ENCODE measurements at regions of chr22 and their contacts with region 1.

Region 1: GRCh38 chr22:39319270-39320022 is at the start of gene RPL3:
- DNase-seq: peak; percentile 94 to 96
- H3K4me3 ChIP-seq: peak within 1 kb of the TSS; percentile 94
- H3K27ac ChIP-seq: peak within 1 kb of the TSS; percentile 98
- H3K4me1 ChIP-seq: peaks cover 24% of the 10 kb centered on the region
- H3K27me3 ChIP-seq: no peaks in the 10 kb centered on the region
- CTCF ChIP-seq: no peak; the same call in 1 of the 2 replicates
- total RNA-seq, gene RPL3: 1,699 and 2,252 TPM in 2 replicates

Region 2: DNA sequence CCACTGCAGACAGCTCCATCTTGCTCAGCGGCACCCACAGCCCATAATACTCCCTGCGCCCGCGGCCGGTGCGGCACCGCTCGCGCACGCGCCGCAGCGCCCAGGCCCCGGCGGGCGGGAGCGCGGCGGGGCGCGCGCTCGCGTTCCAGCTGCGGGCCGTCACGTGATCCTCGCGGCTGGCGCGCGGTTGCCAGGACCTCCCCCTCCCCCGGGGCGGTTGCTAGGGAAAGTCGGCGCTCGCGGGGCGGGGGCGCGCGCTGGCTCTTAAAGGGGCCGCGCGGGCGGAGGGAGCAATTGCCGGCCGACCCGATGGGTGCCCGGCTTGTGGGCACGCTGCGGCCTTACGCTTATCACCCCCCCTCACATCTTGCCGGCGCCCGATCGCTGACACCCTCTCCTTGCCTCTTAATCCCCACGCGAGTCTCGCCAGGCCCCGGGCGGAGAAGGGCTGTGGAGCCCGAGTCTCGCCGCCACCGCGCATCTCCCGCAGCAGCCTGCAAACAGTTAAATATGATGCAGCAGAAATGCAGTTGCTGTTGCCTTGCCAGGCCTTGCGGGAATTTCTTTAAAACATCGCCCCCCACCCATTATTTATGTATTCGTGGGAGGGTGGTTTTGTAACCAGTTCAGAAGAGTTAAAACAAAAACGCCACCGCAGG is 447.1 kb before region 1 on chr22 and contains the start of gene CBX6:
- CTCF ChIA-PET with region 1: no interaction called
- POLR2A ChIA-PET with region 1: no interaction called
- intact Hi-C with region 1: loop called (anchors 2 kb)
- DNase-seq: peak; percentile 73 to 97
- H3K4me3 ChIP-seq: peak within 1 kb of the TSS; percentile 83
- H3K27ac ChIP-seq: peak within 1 kb of the TSS; percentile 62
- H3K4me1 ChIP-seq: peaks cover 28% of the 10 kb centered on the region
- H3K27me3 ChIP-seq: no peaks in the 10 kb centered on the region
- CTCF ChIP-seq: no peak
- total RNA-seq, gene CBX6: 131 and 136 TPM in 2 replicates

Region 3: GRCh38 chr22:39152511-39153219 is 166.8 kb before region 1 on chr22 and contains the start of gene CBX7:
- CTCF ChIA-PET with region 1: no interaction called
- POLR2A ChIA-PET with region 1: interaction called, 20 read pairs
- intact Hi-C with region 1: loop called (anchors 5 kb)
- DNase-seq: peak; percentile 79 to 94
- H3K4me3 ChIP-seq: peak within 1 kb of the TSS; percentile 77
- H3K27ac ChIP-seq: no peak within 1 kb of the TSS
- H3K4me1 ChIP-seq: peaks cover 16% of the 10 kb centered on the region
- H3K27me3 ChIP-seq: no peaks in the 10 kb centered on the region
- CTCF ChIP-seq: no peak
- total RNA-seq, gene CBX7: 28.2 and 29.1 TPM in 2 replicates

Region 4: GRCh38 chr22:39212721-39213376 is 106.6 kb before region 1 on chr22:
- CTCF ChIA-PET with region 1: interaction called, 3 read pairs
- POLR2A ChIA-PET with region 1: interaction called, 12 read pairs
- intact Hi-C with region 1: no loop called
- DNase-seq: peak; percentile 93 to 99
- H3K4me3 ChIP-seq: peak overlapping the region; percentile 41; the same call in 1 of the 2 replicates
- H3K27ac ChIP-seq: peak overlapping the region; percentile 87
- H3K4me1 ChIP-seq: peaks cover 55% of the 10 kb centered on the region
- H3K27me3 ChIP-seq: no peaks in the 10 kb centered on the region
- CTCF ChIP-seq: peak; percentile 61; the same call in 1 of the 2 replicates

Region 5: DNA sequence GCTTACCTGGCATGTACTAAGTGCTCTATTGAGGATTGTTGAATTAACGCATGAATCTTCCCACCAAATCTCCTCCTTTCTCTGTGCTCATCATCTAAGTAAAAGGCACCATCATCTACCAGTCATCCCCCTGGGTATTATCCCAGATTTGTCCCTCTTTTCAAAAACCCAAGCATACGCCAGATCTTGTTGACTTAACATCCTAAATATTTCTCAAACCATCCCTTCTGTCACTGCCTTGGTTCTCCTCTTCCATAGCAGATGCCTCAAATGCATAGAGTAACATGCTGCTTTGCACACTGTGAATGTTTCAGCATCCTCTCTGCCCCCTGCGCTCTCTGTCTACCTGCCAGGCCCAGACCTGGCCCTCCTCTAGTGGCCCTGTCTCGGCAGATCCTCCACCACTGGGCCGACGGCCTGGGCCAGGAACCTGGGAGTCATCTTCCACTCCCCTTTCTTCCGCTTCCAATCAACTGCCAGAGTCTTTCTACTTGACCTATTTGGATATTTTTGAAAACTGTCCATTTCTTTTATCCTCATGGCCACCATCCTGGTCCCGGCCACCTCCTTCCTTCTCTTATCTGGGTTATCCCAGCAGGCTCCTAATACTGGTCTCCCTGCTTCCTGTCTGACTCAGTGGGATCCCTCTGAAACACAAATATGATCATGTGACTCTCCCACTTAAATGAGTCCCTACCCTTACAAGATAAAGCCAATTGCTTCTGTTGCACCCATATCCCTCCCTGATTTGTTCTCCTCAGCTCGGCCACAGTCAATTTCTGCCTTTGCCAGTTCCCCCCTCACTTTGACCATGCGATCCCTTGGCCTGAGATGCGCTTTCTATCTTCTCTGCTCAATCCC is 76.7 kb after region 1 on chr22:
- CTCF ChIA-PET with region 1: interaction called, 5 read pairs
- POLR2A ChIA-PET with region 1: interaction called, 7 read pairs
- intact Hi-C with region 1: loop called (anchors 1 kb)
- DNase-seq: peak in 1 of 2 experiments; percentile 21
- H3K4me3 ChIP-seq: no peak overlapping the region
- H3K27ac ChIP-seq: no peak overlapping the region
- H3K4me1 ChIP-seq: peaks cover 6% of the 10 kb centered on the region
- H3K27me3 ChIP-seq: no peaks in the 10 kb centered on the region
- CTCF ChIP-seq: no peak

Region 6: DNA sequence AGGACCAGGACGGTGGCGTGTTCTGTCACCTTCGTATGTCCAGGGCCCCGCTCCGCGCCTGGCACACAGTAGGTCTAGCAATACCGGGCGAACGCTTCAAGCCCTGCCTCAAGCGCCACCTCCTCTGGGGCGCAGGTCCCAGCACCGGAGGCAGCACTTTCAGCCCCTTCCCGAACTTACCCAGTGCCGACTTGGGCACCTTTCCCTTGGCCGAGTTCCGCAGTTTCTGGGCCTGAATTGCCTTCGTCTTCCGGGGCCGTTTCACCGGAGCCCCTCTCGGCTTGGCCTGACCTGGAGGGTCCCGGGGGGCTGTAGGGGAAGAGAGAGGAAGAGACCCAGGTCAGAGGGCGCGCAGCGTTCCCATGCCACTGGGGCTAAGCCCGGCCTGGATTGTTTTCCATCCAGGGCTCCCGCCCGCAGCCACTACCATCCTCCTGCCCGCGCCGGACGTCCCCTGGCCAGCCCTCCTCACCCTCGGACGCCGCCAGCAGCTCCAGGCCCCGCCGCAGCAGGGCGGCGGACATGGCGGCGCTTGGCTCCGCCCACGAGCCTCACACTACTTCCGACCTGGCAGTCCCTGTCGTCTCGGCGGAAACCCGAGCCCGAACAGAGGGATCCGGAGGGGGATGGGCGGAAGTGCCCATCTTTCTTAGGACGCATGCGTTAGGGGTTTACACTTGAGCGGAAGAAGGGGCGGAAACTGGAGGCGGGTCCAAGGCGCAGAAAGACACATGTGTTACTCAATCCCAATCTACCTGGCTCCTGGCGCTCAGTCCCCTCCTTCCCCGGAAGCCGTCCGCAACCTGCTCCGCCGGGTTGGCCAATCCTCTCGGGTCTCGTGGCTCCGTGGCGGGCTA is 213.0 kb after region 1 on chr22 and contains the start of gene RPS19BP1:
- CTCF ChIA-PET with region 1: interaction called, 17 read pairs
- POLR2A ChIA-PET with region 1: interaction called, 5 read pairs
- intact Hi-C with region 1: no loop called
- DNase-seq: peak; percentile 100
- H3K4me3 ChIP-seq: peak within 1 kb of the TSS; percentile 87
- H3K27ac ChIP-seq: peak within 1 kb of the TSS; percentile 30
- H3K4me1 ChIP-seq: peaks cover 44% of the 10 kb centered on the region
- H3K27me3 ChIP-seq: no peaks in the 10 kb centered on the region
- CTCF ChIP-seq: peak; percentile 24; the same call in 1 of the 2 replicates
- total RNA-seq, gene RPS19BP1: 60.7 and 94.3 TPM in 2 replicates

Region 7: GRCh38 chr22:39997939-39998338 is 678.5 kb after region 1 on chr22:
- CTCF ChIA-PET with region 1: no interaction called
- POLR2A ChIA-PET with region 1: no interaction called
- intact Hi-C with region 1: no loop called
- DNase-seq: peak; percentile 68 to 74
- H3K4me3 ChIP-seq: no peak overlapping the region
- H3K27ac ChIP-seq: no peak overlapping the region
- H3K4me1 ChIP-seq: peaks cover 47% of the 10 kb centered on the region
- H3K27me3 ChIP-seq: peaks cover 14% of the 10 kb centered on the region; the same call in 1 of the 2 replicates
- CTCF ChIP-seq: no peak

Measured in PC-9 (cell line).